AG04449 (cell line): ENCODE measurements at regions of chr15 and their contacts with region 1.

Region 1: GRCh38 chr15:57541805-57542504 is 49.7 kb upstream of the MYZAP start:
- DNase-seq: no peak
- H3K4me3 ChIP-seq: no peak overlapping the region
- CTCF ChIP-seq: peak; percentile 84

Region 2: DNA sequence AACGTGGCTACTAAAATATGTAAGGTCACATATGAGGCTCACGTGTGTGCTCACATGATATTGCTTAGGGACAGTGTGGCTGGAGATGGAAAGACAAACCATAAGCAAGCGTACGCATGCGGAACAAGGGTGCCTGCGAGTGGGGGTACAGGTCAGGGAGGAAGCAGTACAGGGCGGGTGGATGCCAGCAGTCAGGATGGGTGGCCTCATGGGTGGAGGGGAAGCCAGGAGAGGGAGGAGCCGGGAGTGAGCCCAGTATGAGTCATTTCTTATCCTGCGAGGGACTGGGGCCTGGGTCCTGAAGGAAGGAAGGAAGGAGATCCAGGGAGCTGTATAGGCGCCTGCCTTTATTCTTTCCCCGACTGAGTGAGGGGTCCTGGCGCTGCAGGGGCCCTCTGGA is 207.7 kb before region 1 on chr15:
- CTCF ChIA-PET with region 1: interaction called, 254 read pairs
- POLR2A ChIA-PET with region 1: no interaction called
- DNase-seq: no peak
- H3K4me3 ChIP-seq: no peak overlapping the region
- CTCF ChIP-seq: no peak

Region 3: DNA sequence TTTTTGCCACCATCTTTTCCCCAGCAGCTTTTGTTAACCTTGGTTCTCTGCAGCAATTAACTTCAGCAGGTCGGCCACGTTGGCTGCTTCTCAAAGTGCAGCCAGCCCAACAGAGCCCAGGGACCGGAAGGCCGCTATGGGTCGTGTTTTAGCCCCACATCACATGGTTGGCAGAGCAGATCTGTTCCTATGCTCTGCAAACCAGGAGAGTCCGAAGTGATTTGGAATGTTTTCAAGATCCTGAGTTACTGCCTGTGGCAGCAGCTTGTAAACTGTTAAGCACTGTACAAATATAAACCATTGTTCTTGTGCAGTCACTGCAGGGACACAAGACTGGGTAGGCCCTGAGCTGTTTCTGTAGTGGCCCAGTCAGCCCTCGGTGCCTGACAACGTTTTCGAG is 19.8 kb before region 1 on chr15:
- CTCF ChIA-PET with region 1: interaction called, 164 read pairs
- POLR2A ChIA-PET with region 1: interaction called, 4 read pairs
- DNase-seq: no peak
- H3K4me3 ChIP-seq: no peak overlapping the region
- CTCF ChIP-seq: no peak

Region 4: DNA sequence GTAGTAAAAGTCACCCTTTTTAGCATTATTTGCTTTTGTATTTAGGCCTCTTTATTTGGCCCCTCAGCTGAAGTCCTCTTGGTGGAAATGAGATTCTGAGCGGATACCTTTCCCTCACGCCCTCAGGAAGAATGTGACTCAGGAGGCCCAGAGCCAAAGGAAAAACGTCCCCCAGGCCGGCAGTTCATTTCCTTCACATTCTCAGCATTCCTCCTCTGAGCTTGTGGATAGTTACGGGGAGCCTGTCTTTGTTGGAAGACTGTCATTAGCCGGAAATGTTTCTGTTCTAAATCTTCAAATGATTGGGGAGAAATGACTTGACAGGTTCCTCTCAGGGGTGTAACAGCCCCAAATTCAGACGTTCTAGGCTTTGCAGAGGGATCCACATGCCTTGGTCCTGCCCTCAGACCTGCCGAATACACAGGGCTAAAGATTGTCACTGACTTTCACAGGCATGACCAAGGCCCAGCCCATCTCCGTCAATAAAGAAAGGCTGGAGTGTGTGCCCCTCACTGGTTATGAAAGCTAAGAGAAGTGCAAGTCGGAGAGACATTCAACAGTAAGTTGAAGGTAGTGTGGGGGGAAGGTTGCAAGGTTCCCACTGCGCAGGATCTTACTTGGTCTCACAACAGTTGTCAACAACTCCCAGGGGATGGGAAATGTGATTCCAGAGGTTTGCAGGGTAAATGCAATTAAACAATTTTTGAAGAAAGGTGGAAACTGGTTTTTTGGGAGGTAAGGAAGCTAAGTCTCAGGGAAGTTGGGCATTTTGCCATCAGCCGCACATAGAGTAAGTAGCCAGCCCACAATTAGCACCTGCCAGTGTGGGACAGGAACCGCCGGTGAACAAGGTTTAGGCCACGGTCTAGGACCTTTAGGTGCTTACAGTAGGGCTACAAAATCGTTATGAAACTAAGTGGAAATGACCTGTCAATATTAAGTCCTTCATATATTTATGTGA is 10.0 kb after region 1 on chr15:
- CTCF ChIA-PET with region 1: interaction called, 97 read pairs
- POLR2A ChIA-PET with region 1: interaction called, 3 read pairs
- DNase-seq: peak; percentile 26
- H3K4me3 ChIP-seq: no peak overlapping the region
- CTCF ChIP-seq: no peak

Region 5: GRCh38 chr15:57570994-57571393 is 29.0 kb after region 1 on chr15:
- CTCF ChIA-PET with region 1: no interaction called
- POLR2A ChIA-PET with region 1: no interaction called
- DNase-seq: no peak
- H3K4me3 ChIP-seq: no peak overlapping the region
- CTCF ChIP-seq: no peak

Region 6: GRCh38 chr15:57655809-57656208 is 113.9 kb after region 1 on chr15:
- CTCF ChIA-PET with region 1: no interaction called
- POLR2A ChIA-PET with region 1: no interaction called
- DNase-seq: no peak
- H3K4me3 ChIP-seq: no peak overlapping the region
- CTCF ChIP-seq: no peak

Region 7: DNA sequence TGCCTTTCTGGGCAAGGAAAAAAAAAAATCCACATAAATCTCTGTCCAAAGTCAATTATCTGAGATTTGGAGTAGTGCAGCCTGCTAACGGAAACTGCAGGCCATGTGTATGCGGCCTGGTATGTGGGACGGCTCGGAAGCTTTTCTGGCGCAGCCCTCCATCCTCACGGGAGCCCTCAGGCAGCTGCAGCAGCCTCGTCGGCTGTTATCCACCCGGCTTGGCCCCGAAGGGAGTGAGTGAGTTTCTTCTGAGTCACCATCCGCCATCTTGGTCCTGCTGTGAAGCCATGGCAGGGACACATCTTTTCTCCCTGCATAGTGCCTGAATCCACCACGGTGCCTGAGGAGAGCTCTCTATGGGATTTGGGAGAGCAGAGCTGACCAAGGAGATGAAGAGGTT is 227.3 kb after region 1 on chr15:
- CTCF ChIA-PET with region 1: no interaction called
- POLR2A ChIA-PET with region 1: no interaction called
- DNase-seq: peak; percentile 44
- H3K4me3 ChIP-seq: no peak overlapping the region
- CTCF ChIP-seq: no peak